ENCODE measurements at regions of chr17 and their contacts with region 1.

Region 1: GRCh38 chr17:55152236-55152635 is 112.5 kb upstream of the HLF start:
- DNase-seq: no peak
- H3K4me3 Mint-ChIP-seq: no peak overlapping the region
- H3K27ac Mint-ChIP-seq: no peak overlapping the region
- H3K4me1 Mint-ChIP-seq: no peaks in the 10 kb centered on the region
- H3K27me3 Mint-ChIP-seq: no peaks in the 10 kb centered on the region

Region 2: GRCh38 chr17:55062921-55063320 is 89.3 kb before region 1 on chr17:
- CTCF ChIA-PET with region 1: no interaction called
- intact Hi-C with region 1: loop called (anchors 5 kb)
- DNase-seq: no peak
- H3K4me3 Mint-ChIP-seq: no peak overlapping the region
- H3K27ac Mint-ChIP-seq: no peak overlapping the region
- H3K4me1 Mint-ChIP-seq: peaks cover 5% of the 10 kb centered on the region
- H3K27me3 Mint-ChIP-seq: no peaks in the 10 kb centered on the region

Measured in activated naive CD4-positive, alpha-beta T cell treated with anti-CD3 and anti-CD28 coated beads for 36 hours (primary cell).